ENCODE measurements at regions of chr11 and their contacts with region 1.

Region 1: DNA sequence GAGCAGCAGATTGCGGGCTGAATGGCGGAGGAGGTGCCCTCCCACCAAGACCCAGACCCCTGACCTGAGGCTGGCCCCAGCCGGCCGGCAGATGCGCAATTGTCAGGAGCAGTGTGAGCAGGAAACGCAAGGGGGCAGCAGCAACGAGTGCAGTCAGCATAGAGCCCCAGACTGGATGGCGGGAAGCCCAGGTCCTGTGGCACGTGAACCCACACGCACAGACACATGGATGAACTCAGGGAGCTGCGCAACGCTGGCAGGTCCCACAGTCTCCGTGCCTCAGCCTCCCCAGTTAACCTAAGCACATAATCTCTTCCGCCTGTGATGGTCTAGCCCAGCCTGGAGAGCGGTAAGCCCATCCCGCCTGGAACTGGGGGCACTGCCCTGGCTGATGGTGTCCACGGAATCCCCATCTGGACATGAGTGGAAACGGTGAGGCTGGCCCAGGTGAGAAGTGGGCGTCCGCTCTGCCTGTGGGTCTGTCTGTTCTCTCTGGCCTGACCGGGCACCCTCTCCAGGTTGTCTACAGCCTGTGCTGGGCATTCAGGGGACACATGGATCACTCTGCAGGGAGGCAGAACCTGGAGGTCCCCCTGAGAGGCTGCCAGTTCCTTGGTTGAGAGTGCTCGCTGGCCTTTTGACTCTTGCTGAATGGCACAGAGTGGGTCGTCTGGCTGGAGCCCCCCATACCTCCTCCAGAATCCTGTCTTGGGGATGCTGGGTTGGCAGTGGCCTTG is 626 bp upstream of the TBX10 start:
- DNase-seq: no peak
- ATAC-seq: peak; percentile 91
- H3K4me3 Mint-ChIP-seq: no peak overlapping the region
- H3K27ac Mint-ChIP-seq: no peak overlapping the region
- H3K4me1 Mint-ChIP-seq: peaks cover 13% of the 10 kb centered on the region
- H3K27me3 Mint-ChIP-seq: peaks cover 2% of the 10 kb centered on the region
- CTCF ChIP-seq: no peak

Region 2: GRCh38 chr11:67656278-67656922 is 16.2 kb after region 1 on chr11:
- CTCF ChIA-PET with region 1: interaction called, 4 read pairs
- POLR2A ChIA-PET with region 1: no interaction called
- intact Hi-C with region 1: loop called (anchors 1 kb)
- DNase-seq: no peak
- ATAC-seq: peak; percentile 43
- H3K4me3 Mint-ChIP-seq: no peak overlapping the region
- H3K27ac Mint-ChIP-seq: no peak overlapping the region
- H3K4me1 Mint-ChIP-seq: peaks cover 8% of the 10 kb centered on the region
- H3K27me3 Mint-ChIP-seq: no peaks in the 10 kb centered on the region
- CTCF ChIP-seq: no peak